AG04449 (cell line): ENCODE measurements at regions of chr13 and their contacts with region 1.

Region 1: GRCh38 chr13:51729866-51730546 is 74.0 kb downstream of the DHRS12 start:
- DNase-seq: peak; percentile 53
- H3K4me3 ChIP-seq: no peak overlapping the region
- CTCF ChIP-seq: no peak

Region 2: GRCh38 chr13:51435002-51435578 is 294.9 kb before region 1 on chr13:
- CTCF ChIA-PET with region 1: interaction called, 13 read pairs
- POLR2A ChIA-PET with region 1: no interaction called
- DNase-seq: no peak
- H3K4me3 ChIP-seq: no peak overlapping the region
- CTCF ChIP-seq: peak; percentile 28

Region 3: GRCh38 chr13:51444922-51445321 is 285.1 kb before region 1 on chr13:
- CTCF ChIA-PET with region 1: interaction called, 12 read pairs
- POLR2A ChIA-PET with region 1: interaction called, 4 read pairs
- DNase-seq: peak; percentile 23
- H3K4me3 ChIP-seq: no peak overlapping the region
- CTCF ChIP-seq: peak; percentile 20

Region 4: GRCh38 chr13:51583875-51584730 is 145.9 kb before region 1 on chr13 and contains the start of gene WDFY2:
- CTCF ChIA-PET with region 1: interaction called, 13 read pairs
- POLR2A ChIA-PET with region 1: interaction called, 3 read pairs
- DNase-seq: peak; percentile 98
- H3K4me3 ChIP-seq: peak within 1 kb of the TSS; percentile 92
- CTCF ChIP-seq: peak; percentile 51

Region 5: GRCh38 chr13:51740698-51741097 is 10.7 kb after region 1 on chr13:
- CTCF ChIA-PET with region 1: interaction called, 21 read pairs
- POLR2A ChIA-PET with region 1: no interaction called
- DNase-seq: no peak
- H3K4me3 ChIP-seq: no peak overlapping the region
- CTCF ChIP-seq: no peak

Region 6: GRCh38 chr13:51959773-51960172 is 229.8 kb after region 1 on chr13:
- CTCF ChIA-PET with region 1: no interaction called
- POLR2A ChIA-PET with region 1: no interaction called
- DNase-seq: no peak
- H3K4me3 ChIP-seq: no peak overlapping the region
- CTCF ChIP-seq: no peak